ENCODE measurements at regions of chr20 and their contacts with region 1.

Region 1: DNA sequence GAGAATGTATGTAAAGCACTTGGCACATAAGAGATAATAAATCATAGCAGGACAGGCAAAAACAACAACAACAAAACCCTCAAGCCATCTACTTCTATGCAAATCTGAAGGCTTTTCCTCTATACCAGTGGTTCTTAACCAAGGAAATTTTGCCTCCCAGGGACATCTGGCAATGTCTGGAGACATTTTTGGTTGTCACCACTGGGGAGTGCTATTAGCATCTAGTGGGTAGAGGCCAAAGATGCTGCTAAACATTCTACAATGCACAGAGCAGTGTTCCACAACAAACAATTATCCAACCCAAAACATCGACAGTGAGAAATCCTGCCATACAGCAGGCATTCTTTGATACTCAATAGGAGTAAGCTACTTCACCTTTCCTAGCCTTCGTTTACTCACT is 28.2 kb downstream of the NDRG3 start:
- DNase-seq: no peak
- H3K4me3 ChIP-seq: no peak overlapping the region
- H3K27ac ChIP-seq: no peak overlapping the region
- H3K4me1 ChIP-seq: no peaks in the 10 kb centered on the region
- H3K27me3 ChIP-seq: no peaks in the 10 kb centered on the region
- CTCF ChIP-seq: peak; percentile 26; the same call in 1 of the 2 replicates

Region 2: GRCh38 chr20:36599912-36600345 is 117.7 kb before region 1 on chr20:
- CTCF ChIA-PET with region 1: no interaction called
- POLR2A ChIA-PET with region 1: no interaction called
- intact Hi-C with region 1: no loop called
- DNase-seq: no peak
- H3K4me3 ChIP-seq: no peak overlapping the region
- H3K27ac ChIP-seq: no peak overlapping the region
- H3K4me1 ChIP-seq: 0 out of 2 replicates have a peak, but pooled peaks cover 6% of the 10 kb centered on the region
- H3K27me3 ChIP-seq: no peaks in the 10 kb centered on the region
- CTCF ChIP-seq: no peak

Region 3: DNA sequence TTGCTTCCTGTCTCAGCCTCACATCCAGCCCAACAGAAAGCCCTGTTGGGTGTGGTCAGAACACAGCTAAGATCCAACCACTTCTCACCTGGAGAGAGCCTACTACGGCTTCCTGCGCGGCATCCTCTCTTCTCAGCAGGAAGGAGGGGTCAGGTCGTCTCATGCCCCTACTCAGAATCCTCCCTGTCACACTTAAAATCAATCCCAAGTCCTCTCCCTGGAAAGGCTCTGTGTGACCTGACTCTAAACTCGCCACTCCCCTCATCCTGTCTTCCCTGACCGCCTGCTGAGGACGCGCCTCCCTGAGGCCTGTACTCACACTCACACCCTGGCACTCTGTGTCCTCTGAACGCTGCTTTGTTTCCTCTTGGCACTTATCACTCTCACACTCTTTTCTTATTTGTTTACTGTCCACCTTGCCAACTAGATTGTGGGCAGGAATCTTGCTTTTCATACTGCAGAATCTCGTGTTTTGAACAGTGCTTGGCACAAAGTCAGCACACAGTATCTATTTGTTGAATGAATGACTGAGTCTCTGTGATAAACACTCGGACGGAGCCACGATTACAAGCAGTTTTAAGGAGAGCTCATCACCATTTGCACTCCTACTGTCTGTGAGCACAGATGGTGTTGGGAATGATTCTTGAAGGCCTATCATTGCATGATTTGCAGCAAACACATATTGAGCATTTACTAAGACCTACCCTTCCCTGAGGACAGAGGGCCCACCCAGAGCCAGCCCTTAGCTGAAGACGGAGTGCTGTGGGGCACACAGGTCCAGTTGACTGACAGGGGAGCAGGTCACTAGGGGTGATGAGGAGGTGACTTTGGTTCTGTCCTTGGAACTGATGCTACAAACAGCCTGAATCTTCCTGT is 93.4 kb before region 1 on chr20:
- CTCF ChIA-PET with region 1: no interaction called
- POLR2A ChIA-PET with region 1: interaction called, 23 read pairs
- intact Hi-C with region 1: no loop called
- DNase-seq: peak in 1 of 2 experiments; percentile 29
- H3K4me3 ChIP-seq: no peak overlapping the region
- H3K27ac ChIP-seq: no peak overlapping the region
- H3K4me1 ChIP-seq: no peaks in the 10 kb centered on the region
- H3K27me3 ChIP-seq: no peaks in the 10 kb centered on the region
- CTCF ChIP-seq: no peak

Region 4: GRCh38 chr20:36688630-36689029 is 29.0 kb before region 1 on chr20:
- CTCF ChIA-PET with region 1: no interaction called
- POLR2A ChIA-PET with region 1: interaction called, 10 read pairs
- intact Hi-C with region 1: no loop called
- DNase-seq: no peak
- H3K4me3 ChIP-seq: no peak overlapping the region
- H3K27ac ChIP-seq: no peak overlapping the region
- H3K4me1 ChIP-seq: no peaks in the 10 kb centered on the region
- H3K27me3 ChIP-seq: no peaks in the 10 kb centered on the region
- CTCF ChIP-seq: no peak